ENCODE measurements at regions of chr16 and their contacts with region 1.

Region 1: DNA sequence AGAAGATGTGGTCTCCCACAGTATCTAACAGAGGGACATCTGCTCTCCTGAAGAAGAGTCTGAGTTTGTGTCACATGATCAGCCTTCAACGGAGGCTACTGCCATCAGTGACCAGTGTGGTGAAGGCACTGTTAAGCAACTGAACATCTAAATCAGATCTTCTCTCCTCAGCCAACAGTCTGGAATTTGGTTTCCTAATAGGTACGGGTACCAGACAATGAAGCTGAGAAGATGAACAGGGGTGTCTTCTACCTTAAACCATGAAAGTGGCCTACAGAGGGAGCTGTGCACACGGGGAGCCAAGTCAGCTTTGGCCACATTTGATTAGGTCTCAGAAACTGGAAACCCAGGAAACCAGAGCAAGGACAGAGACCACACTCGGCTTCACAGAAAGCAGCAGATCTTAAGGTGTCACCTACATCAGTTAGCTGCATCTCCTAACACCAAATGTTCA is 41.8 kb downstream of the BRD7 start:
- DNase-seq: peak in 2 of 4 experiments; percentile 41 to 72
- ATAC-seq: peak; percentile 90
- H3K4me3 ChIP-seq: no peak overlapping the region
- H3K27ac ChIP-seq: no peak overlapping the region
- H3K4me1 ChIP-seq: peaks cover 0 to 15% of the 10 kb centered on the region in 2 experiments; a peak in 2 of 5 replicates
- H3K27me3 ChIP-seq: no peaks in the 10 kb centered on the region
- CTCF ChIP-seq: peak; percentile 64 to 78 (median 74)
- EP300 ChIP-seq: no peak
- POLR2A ChIP-seq: no peak
- RAD21 ChIP-seq: peak; percentile 39 to 71; a peak in 3 of 4 replicates

Region 2: DNA sequence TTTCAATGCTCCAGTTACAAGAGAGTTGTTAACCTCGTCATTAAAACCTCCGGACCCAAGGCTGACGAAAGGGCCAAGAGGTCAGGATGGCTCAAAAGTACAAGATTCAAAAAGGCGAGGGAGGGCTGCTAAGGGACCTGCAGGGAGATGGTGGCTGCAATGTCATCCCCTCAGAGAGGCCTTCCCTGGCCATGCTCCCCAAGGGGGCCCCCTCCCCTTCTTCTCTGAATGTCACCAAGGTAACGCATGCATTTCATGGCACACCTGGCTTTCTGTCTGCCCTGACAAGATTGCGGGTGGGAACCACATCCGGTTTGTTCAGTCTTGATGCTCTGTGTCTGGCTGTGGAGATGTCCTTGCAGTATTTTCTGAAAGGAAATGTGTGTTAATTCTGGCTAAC is 863.4 kb before region 1 on chr16:
- CTCF ChIA-PET with region 1: no interaction called
- POLR2A ChIA-PET with region 1: no interaction called
- in situ Hi-C with region 1: no loop called
- intact Hi-C with region 1: no loop called
- DNase-seq: no peak
- ATAC-seq: no peak
- H3K4me3 ChIP-seq: no peak overlapping the region
- H3K27ac ChIP-seq: no peak overlapping the region
- H3K4me1 ChIP-seq: peaks cover 0 to 6% of the 10 kb centered on the region in 2 experiments; a peak in 1 of 5 replicates
- H3K27me3 ChIP-seq: peaks cover 6 to 30% of the 10 kb centered on the region in 2 experiments; a peak in 4 of 5 replicates
- CTCF ChIP-seq: no peak
- EP300 ChIP-seq: no peak
- POLR2A ChIP-seq: no peak
- RAD21 ChIP-seq: no peak

Region 3: GRCh38 chr16:50245417-50246298 is 81.3 kb before region 1 on chr16:
- CTCF ChIA-PET with region 1: no interaction called
- POLR2A ChIA-PET with region 1: no interaction called
- in situ Hi-C with region 1: no loop called
- intact Hi-C with region 1: loop called (anchors 5 kb)
- DNase-seq: peak; percentile 87 to 93 (median 91)
- ATAC-seq: peak; percentile 82
- H3K4me3 ChIP-seq: peak overlapping the region; percentile 76
- H3K27ac ChIP-seq: peak overlapping the region; percentile 79
- H3K4me1 ChIP-seq: peaks cover 34 to 39% of the 10 kb centered on the region in 2 experiments
- H3K27me3 ChIP-seq: no peaks in the 10 kb centered on the region
- CTCF ChIP-seq: peak in 2 of 3 experiments; percentile 39 to 59; a peak in 3 of 6 replicates
- EP300 ChIP-seq: peak; percentile 39
- POLR2A ChIP-seq: peak; percentile 60
- RAD21 ChIP-seq: peak in 1 of 2 experiments; percentile 5; a peak in 1 of 4 replicates

Region 4: GRCh38 chr16:50281964-50282538 is 44.9 kb before region 1 on chr16:
- CTCF ChIA-PET with region 1: no interaction called
- POLR2A ChIA-PET with region 1: no interaction called
- in situ Hi-C with region 1: no loop called
- intact Hi-C with region 1: no loop called
- DNase-seq: peak in 2 of 4 experiments; percentile 38 to 52
- ATAC-seq: peak; percentile 58
- H3K4me3 ChIP-seq: no peak overlapping the region
- H3K27ac ChIP-seq: peak overlapping the region; percentile 60; the same call in 1 of the 3 replicates
- H3K4me1 ChIP-seq: peaks cover 43 to 47% of the 10 kb centered on the region in 2 experiments
- H3K27me3 ChIP-seq: no peaks in the 10 kb centered on the region
- CTCF ChIP-seq: no peak; a peak in 1 of 6 replicates
- EP300 ChIP-seq: no peak
- POLR2A ChIP-seq: no peak
- RAD21 ChIP-seq: peak in 1 of 2 experiments; percentile 38; a peak in 1 of 4 replicates

Region 5: DNA sequence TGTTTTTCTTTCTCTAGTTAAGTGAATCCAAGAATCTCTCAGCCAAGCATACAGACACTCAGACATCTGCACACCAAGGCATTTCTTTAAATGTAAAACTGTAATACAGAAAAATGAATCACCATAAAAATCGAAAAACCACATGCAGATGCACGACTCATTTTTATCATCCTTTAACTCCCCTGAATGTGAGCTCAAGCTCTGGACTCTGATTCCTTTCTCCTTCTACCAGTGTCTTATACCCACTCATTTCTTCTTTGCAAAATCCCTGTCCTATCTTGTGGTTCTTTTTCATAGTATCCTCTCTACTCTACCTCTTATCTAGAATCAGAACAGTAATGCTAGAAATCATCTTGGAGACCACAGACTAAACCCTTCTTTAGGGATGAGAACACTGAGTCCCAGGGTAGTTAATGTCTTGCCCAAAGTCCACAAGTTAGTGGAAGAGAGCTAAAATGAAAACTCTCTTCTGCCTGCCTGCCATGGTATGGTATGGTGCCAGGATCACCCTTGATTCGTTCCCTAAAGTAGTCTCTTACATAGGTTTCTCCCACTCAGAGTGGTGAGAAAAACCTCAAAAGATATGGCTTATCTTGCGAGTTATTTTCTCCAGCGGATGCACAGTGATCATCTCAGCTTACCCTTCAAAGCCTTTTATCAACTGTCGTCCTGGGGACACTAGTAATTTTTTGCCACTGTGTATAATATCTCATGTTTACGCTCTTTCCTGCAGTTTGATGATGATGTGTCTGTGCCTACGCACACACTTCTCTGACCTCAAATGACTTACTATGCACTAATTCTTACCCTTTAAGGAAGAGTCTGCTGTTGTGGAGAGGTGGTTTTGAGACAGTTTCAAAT is 11.6 kb after region 1 on chr16:
- CTCF ChIA-PET with region 1: no interaction called
- POLR2A ChIA-PET with region 1: interaction called, 10 read pairs
- in situ Hi-C with region 1: no loop called
- intact Hi-C with region 1: no loop called
- DNase-seq: peak in 1 of 4 experiments; percentile 39
- ATAC-seq: peak; percentile 27
- H3K4me3 ChIP-seq: no peak overlapping the region
- H3K27ac ChIP-seq: peak overlapping the region; percentile 45; the same call in 2 of the 3 replicates
- H3K4me1 ChIP-seq: peaks cover 9 to 30% of the 10 kb centered on the region in 2 experiments
- H3K27me3 ChIP-seq: no peaks in the 10 kb centered on the region
- CTCF ChIP-seq: no peak
- EP300 ChIP-seq: peak; percentile 51; the same call in 1 of the 2 replicates
- POLR2A ChIP-seq: no peak
- RAD21 ChIP-seq: 0 out of 4 replicates have a peak, but pooled peaks of 1 of the 2 experiments have one; percentile 9

Region 6: DNA sequence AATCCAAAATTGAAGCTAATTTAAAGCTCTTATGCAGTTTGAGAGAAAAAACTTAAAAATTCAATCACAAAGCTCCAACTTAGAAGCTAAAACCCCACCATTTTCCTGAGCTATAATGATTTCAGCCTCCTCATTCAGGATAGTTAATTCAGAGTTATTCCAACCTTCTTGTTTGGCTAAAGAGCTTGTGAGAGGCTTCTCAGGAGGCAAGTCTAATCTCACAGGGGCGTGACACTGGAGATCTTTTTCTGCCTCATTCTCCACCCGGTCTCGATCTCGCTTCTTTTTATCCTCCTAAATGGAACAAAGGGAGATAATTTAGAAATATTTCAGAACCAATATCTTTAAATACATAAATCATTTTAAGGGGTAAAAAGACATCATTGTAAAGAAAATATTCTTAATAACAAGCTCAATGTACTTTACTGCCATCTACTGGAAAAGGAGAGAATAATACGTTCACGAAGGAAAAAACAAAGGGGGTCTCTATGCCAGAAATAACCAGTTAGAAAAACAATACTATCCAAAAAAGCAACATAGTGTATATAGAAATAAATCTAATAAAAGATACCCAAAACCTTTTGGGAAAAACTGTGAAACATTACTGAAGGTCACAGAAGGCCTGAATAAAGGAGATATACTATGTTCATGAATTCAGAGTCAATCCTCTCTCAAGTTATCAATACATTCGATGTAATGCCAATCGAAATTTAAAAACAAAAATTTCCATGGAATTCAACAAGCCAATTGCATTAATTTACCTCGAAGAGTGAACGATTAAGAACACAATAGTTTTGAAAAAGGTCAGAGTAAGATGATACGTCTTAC is 27.9 kb after region 1 on chr16:
- CTCF ChIA-PET with region 1: interaction called, 3 read pairs
- POLR2A ChIA-PET with region 1: interaction called, 3 read pairs
- in situ Hi-C with region 1: no loop called
- intact Hi-C with region 1: loop called (anchors 2 kb)
- DNase-seq: peak in 3 of 4 experiments; percentile 30 to 34 (median 34)
- ATAC-seq: no peak
- H3K4me3 ChIP-seq: no peak overlapping the region
- H3K27ac ChIP-seq: no peak overlapping the region
- H3K4me1 ChIP-seq: no peaks in the 10 kb centered on the region
- H3K27me3 ChIP-seq: no peaks in the 10 kb centered on the region
- CTCF ChIP-seq: peak in 2 of 3 experiments; percentile 32 to 67; a peak in 3 of 6 replicates
- EP300 ChIP-seq: no peak
- POLR2A ChIP-seq: no peak
- RAD21 ChIP-seq: peak; percentile 62 to 69

Region 7: DNA sequence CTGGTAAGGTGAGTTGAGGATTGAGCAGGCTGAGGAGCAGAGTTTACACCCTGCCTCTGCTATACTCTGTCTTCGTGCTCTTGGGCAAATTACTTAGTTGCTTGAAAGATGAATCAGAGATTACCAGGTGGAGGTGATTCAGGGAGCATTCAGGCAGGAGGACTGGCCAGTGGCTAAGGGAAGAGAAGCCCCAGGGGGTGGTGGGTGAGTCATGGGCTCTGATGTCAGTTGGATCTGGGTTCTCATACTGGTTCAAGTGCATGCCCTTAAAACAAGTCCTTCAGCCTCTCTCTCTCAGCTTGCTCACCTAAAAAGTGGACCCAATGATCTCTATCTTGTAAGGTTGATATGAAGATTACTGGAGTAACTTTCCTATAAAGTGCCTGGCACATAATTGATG is 70.2 kb after region 1 on chr16:
- CTCF ChIA-PET with region 1: no interaction called
- POLR2A ChIA-PET with region 1: no interaction called
- in situ Hi-C with region 1: no loop called
- intact Hi-C with region 1: no loop called
- DNase-seq: peak in 1 of 4 experiments; percentile 10
- ATAC-seq: no peak
- H3K4me3 ChIP-seq: no peak overlapping the region
- H3K27ac ChIP-seq: no peak overlapping the region
- H3K4me1 ChIP-seq: peaks cover 4 to 17% of the 10 kb centered on the region in 2 experiments; a peak in 3 of 5 replicates
- H3K27me3 ChIP-seq: peaks cover 0 to 22% of the 10 kb centered on the region in 2 experiments; a peak in 3 of 5 replicates
- CTCF ChIP-seq: no peak
- EP300 ChIP-seq: no peak
- POLR2A ChIP-seq: no peak
- RAD21 ChIP-seq: no peak

Measured in K562 (cell line).